Vagina (tissue), 2 donors: ENCODE measurements at regions of chr12 and their contacts with region 1.

Region 1: GRCh38 chr12:78035901-78036606 is 205.4 kb downstream of the NAV3 start:
- DNase-seq: no peak
- H3K4me3 ChIP-seq: peak overlapping the region in 1 of 2 donors; percentile 16
- H3K27ac ChIP-seq: no peak overlapping the region
- H3K4me1 ChIP-seq: no peaks in the 10 kb centered on the region
- H3K27me3 ChIP-seq: no peaks in the 10 kb centered on the region
- CTCF ChIP-seq: no peak
- POLR2A ChIP-seq: no peak

Region 2: DNA sequence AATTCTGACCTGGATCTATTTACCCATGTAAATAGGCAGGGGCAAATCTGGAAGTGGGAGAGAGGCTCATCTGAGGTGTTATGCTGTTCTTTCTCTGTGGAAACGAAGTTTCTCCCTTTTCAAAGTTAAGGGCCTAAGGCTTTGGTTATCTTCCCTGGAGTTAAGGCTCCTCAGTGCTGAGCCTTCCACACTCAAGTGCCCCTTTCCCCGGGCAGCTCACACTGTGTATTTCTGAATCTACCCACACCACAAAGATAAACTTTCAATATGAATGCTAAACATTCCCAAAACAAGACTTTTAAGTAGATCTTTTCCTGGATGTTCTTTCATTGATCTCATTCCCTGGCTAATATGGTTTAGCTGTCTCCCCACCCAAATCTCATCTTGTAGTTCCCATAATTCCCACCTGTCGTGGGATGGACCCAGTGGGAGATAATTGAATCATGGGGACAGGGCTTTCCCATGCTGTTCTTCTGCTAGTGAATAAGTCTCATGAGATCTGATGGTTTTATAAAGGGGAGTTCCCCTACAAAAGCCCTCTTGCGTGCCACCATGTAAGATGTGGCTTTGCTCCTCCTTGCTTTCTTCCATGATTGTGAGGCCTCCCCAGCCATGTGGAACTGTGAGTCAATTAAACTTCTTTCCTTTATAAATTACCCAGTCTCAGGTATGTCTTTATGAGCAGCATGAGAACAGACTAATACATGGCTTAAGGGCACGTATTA is 45.7 kb after region 1 on chr12:
- intact Hi-C with region 1: loop called (anchors 2 kb)
- DNase-seq: no peak
- H3K4me3 ChIP-seq: no peak overlapping the region
- H3K27ac ChIP-seq: no peak overlapping the region
- H3K4me1 ChIP-seq: no peaks in the 10 kb centered on the region
- H3K27me3 ChIP-seq: no peaks in the 10 kb centered on the region
- CTCF ChIP-seq: no peak
- POLR2A ChIP-seq: no peak